Posterior vena cava (tissue), 2 donors: ENCODE measurements at regions of chr1 and their contacts with region 1.

Region 1: DNA sequence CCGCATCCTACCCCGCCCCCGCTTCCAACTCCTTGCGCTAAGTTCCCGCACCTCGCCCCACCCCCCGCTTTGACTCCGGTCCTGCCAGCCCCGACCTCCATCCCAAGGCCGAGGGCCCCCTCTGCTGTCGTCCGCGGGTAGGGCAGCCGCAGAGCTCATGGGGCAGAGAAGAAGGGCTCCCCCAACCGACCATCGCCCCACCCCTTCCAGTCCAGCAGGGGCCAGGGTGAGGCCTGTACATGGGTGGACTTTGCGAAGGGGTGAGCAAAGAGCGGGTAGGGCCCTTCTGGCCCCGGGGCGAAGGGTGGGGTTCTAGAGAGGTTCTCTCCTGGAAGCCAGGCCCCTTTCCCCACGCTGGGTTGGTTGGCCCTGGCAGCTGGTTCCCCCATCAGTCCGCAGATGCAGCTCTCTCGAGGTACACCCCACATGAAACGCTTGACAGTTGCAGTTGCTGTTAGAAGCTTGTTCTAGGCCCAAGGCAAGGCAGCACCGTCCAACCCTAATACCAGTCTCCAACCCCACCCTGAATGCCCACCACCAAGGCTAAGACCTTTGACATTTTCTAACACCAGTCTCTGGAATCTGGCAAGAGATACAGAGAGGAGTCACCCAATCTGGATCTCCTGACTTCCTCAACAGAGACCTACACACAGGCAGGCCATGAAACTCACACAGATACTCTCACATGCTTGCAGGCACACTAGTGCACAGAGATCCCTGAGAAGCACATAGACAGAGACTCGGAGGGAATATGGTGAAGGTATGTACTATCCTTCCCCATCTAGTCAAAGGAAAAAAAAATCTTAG is 25.3 kb upstream of the ADGRB2 start:
- DNase-seq: peak; percentile 98

Region 2: DNA sequence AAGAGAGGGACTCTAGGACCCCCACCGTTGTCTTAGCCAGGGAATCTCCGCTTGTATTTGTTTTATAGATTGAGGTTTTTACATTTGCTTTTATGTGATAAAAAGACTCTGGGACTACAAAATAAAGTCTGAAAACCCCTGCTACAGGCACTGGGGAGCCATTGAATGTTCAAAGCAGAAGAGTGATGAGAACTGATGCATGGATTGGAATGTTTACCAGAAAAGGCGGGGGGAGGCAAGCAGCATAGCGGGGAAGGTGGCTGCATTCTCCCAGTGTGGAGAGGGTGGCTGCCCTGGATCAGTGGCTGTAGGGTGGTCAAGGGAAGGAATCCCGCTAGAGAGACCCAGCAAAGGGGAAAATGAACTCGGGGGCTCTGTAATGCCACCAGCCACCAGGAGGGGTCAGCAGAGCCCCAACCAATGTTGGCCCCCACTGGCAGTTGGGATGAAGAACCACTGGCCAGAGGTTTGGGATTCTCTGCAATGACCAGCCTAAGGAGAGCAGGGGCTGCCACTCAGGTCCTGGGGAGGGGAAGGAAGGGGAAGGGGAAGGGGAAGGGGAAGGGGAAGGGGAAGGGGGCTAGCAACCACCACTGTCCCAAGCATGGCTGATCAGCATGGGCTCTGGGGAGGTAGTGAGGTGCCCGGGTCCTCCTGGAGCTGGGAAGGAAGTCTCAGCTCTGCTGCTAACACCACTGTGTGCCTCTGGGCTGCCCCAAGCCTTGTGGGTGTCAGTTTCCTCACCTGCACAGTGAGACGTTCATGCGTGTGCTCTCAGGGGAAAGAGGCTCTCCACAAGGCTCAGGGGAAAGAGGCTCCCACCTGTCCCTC is 125.6 kb before region 1 on chr1:
- intact Hi-C with region 1: loop called (anchors 2 to 10 kb)
- DNase-seq: no peak

Region 3: DNA sequence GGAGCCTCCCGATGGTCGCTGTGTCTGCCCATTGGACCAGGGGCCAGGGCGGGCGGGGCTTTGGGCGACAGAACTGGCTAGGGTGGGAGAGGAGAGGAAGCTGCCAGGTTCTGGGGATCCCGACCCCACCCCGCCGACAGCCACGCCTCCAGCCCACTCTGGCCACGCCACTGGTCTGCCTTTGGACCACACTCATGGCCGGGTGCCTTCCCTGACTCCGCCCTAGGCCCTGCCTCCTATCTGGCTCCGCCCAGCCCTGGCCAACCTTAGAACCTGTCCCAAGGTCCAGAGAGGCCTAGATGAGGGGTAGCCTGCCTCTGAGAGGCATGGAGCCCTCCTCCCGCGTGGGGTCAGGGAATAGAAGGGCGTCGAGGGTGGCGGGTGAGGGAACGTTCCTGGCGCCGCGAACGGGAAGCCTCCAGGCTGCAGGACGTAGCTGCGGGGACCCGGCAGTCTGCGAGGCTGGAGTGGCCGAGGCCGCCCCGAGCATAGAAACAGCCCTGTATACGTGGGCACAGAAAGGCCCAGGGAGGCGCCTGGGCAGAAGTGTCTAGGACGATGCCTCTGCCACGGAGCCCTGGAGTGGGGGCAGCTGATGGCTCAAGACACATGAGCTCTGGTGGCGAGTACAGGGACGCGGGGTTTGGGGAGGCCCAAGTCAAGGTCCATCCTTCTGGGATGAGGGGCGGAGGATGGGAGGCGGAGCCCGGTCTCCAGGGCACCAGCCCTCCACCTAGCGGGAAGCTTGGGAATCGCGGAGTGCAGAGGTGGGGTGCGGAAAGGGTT is 74.2 kb before region 1 on chr1:
- intact Hi-C with region 1: loop called in 1 of 2 experiments (anchors 10 kb)
- DNase-seq: peak; percentile 98

Region 4: GRCh38 chr1:31811583-31811982 is 22.1 kb after region 1 on chr1:
- intact Hi-C with region 1: no loop called
- DNase-seq: peak; percentile 51

Region 5: GRCh38 chr1:31959521-31960340 is 170.3 kb after region 1 on chr1:
- intact Hi-C with region 1: loop called in 1 of 2 experiments (anchors 10 kb)
- DNase-seq: no peak